A549 (cell line): ENCODE measurements at regions of chr2 and their contacts with region 1.

Region 1: DNA sequence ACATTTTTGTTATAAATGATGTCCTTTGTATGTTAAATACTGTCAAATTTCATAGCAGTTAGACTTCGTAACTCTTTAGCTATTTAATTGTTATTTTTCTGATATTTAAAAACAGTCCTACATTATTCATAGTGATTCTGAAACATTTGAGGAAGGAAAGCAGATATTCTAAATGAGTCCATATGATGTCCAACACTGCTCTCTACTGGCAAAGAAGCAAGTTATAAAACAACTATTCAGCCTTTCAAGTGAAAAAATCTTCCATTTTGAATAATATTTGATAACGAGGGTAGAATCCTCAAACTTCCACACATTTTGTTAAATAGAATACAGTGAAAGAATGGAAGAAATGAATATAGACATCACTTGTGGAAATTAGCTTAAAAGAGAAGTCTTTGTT is 220.8 kb downstream of the GULP1 start:
- DNase-seq: peak; percentile 4 to 65
- ATAC-seq: peak; percentile 68 to 84; a peak in 5 of 6 replicates
- H3K4me3 ChIP-seq: no peak overlapping the region; the same call in 2 of the 3 replicates
- H3K27ac ChIP-seq: peak overlapping the region in 1 of 2 experiments; percentile 39; a peak in 2 of 6 replicates
- H3K4me1 ChIP-seq: peaks cover 12% of the 10 kb centered on the region; the same call in 1 of the 3 replicates
- CTCF ChIP-seq: peak; percentile 86
- EP300 ChIP-seq: no peak
- POLR2A ChIP-seq: no peak
- RAD21 ChIP-seq: peak; percentile 89 to 95

Region 2: GRCh38 chr2:187842978-187843847 is 669.2 kb before region 1 on chr2:
- CTCF ChIA-PET with region 1: interaction called, 12 read pairs
- POLR2A ChIA-PET with region 1: no interaction called
- DNase-seq: peak; percentile 15 to 79
- ATAC-seq: peak; percentile 80 to 92
- H3K4me3 ChIP-seq: no peak overlapping the region
- H3K27ac ChIP-seq: no peak overlapping the region
- H3K4me1 ChIP-seq: no peaks in the 10 kb centered on the region
- CTCF ChIP-seq: peak; percentile 90
- EP300 ChIP-seq: no peak
- POLR2A ChIP-seq: no peak
- RAD21 ChIP-seq: peak; percentile 85 to 88

Region 3: DNA sequence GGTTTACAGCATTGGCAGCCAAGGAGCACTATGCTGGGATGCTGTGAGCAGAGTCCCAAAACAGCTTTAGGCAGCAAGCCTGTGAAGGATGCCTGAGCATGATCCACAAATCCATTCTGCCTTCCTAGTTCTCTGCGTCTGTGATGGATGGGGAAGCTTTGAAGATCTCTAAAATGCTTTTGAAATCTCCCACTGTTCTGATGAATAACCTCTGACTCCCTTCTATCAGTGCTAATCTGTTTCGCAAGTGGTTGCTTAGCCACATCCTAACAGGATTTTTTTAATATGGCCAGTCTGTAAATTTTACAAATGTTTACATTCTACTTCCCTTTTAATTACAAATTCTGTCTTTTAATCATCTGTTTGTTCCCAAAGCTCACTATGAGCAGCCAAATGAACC is 98.4 kb after region 1 on chr2:
- CTCF ChIA-PET with region 1: no interaction called
- POLR2A ChIA-PET with region 1: no interaction called
- DNase-seq: no peak
- ATAC-seq: no peak
- H3K4me3 ChIP-seq: no peak overlapping the region
- H3K27ac ChIP-seq: no peak overlapping the region
- H3K4me1 ChIP-seq: peaks cover 6% of the 10 kb centered on the region; the same call in 1 of the 3 replicates
- CTCF ChIP-seq: no peak
- EP300 ChIP-seq: no peak
- POLR2A ChIP-seq: no peak
- RAD21 ChIP-seq: no peak